ENCODE measurements at regions of chrX and their contacts with region 1.

Region 1: GRCh38 chrX:2589186-2590030 is 88.6 kb upstream of the DHRSX start:
- DNase-seq: no peak
- ATAC-seq: no peak
- H3K4me3 ChIP-seq: no peak overlapping the region
- H3K27ac ChIP-seq: no peak overlapping the region
- H3K4me1 ChIP-seq: peaks cover 0 to 2% (median 0%) of the 10 kb centered on the region in 3 donors
- H3K27me3 ChIP-seq: no peaks in the 10 kb centered on the region
- CTCF ChIP-seq: no peak

Region 2: GRCh38 chrX:1456996-1457571 is 1132.3 kb before region 1 on chrX:
- intact Hi-C with region 1: loop called in 1 of 3 experiments (anchors 5 kb)
- DNase-seq: peak in 1 of 6 donors; percentile 23
- ATAC-seq: no peak
- H3K4me3 ChIP-seq: no peak overlapping the region
- H3K27ac ChIP-seq: no peak overlapping the region
- H3K4me1 ChIP-seq: peaks cover 0 to under 1% (median 0%) of the 10 kb centered on the region in 3 donors
- H3K27me3 ChIP-seq: no peaks in the 10 kb centered on the region
- CTCF ChIP-seq: no peak

Region 3: DNA sequence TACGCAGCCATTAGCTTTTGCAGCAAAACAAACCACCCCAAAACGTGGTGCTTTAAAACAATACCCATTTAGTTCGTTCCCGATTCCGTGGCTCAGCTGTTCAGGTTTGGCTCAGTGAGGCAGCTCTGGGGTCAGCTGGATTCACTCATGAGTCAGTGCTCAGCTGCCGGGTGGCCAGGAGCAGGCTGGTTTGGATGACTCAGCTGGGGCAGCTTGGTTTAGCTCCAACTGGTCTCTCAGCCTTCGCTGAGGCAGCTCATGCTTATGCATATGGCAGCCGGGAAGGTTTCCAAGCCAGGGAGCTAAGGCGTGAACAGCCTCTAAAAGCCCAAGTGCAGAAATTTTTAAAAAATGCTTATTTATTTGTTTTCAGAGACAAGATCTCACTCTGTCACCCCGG is 88.4 kb after region 1 on chrX:
- intact Hi-C with region 1: no loop called
- DNase-seq: peak; percentile 75 to 92 (median 86)
- ATAC-seq: peak; percentile 98 to 99 (median 99)
- H3K4me3 ChIP-seq: no peak overlapping the region
- H3K27ac ChIP-seq: no peak overlapping the region
- H3K4me1 ChIP-seq: no peaks in the 10 kb centered on the region
- H3K27me3 ChIP-seq: no peaks in the 10 kb centered on the region
- CTCF ChIP-seq: no peak